Uterus (tissue), 4 donors: ENCODE measurements at regions of chr17 and their contacts with region 1.

Region 1: DNA sequence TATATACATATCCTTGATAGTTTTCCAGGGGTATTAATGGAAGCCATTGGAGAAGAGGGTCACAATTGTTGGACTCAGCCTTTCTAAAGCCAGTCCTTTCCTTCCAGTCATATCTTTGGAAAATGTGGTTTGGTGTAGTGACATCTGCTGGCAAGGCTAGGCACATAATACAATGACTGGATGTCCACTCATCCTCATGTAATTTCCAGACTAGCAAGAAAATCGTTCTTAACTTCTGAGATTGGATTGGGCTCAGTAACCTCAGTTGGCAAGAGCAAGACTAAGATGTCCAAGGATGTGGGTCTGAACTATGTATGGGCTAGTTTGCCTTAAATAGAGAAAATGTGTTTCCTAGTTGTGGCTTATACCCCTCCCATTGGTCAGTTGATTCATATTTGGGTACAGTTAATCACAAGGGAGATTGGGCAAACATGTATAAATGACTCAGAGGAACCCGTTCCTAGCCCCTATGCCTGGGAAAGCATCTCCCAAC is 8.7 kb upstream of the KAT7 start:
- DNase-seq: peak in 1 of 2 donors; percentile 54
- H3K4me3 ChIP-seq: no peak overlapping the region
- H3K27ac ChIP-seq: peak overlapping the region in 1 of 2 donors; percentile 4
- H3K4me1 ChIP-seq: peaks cover 14 to 16% of the 10 kb centered on the region in 2 donors
- H3K27me3 ChIP-seq: no peaks in the 10 kb centered on the region
- CTCF ChIP-seq: peak; percentile 53 to 88 (median 68)
- POLR2A ChIP-seq: no peak

Region 2: DNA sequence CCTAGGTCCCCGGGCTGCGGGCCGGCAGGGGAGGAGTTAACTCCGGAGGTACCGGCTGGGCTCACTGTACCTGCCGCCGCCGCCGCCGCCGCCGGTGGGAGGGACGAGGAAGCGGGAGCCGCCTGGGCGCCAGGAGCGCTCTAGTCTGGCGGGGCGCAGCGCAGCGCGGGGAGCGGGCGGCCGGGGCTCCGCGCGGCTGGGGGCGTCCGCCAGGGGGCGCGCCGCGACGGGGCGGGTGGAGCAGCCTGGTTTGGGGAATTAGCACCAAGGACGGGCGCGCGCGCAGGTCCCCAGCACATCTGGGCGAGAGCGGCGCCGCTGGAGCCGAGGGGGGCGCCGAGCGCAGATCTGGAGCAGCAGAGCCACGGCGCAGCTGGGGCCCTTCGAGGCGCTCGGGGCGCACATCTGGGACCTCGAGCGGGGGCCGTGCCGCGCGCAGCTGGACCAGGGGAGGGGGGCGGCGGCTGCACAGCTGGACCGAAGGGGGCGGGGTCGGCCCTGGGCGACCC is 204.2 kb before region 1 on chr17 and contains the start of gene NXPH3:
- intact Hi-C with region 1: loop called (anchors 10 kb)
- DNase-seq: peak; percentile 63 to 76
- H3K4me3 ChIP-seq: peak within 1 kb of the TSS; percentile 56 to 84
- H3K27ac ChIP-seq: peak within 1 kb of the TSS; percentile 93
- H3K4me1 ChIP-seq: peaks cover 9 to 13% of the 10 kb centered on the region in 2 donors
- H3K27me3 ChIP-seq: no peaks in the 10 kb centered on the region
- CTCF ChIP-seq: peak; percentile 26 to 88 (median 74)
- POLR2A ChIP-seq: peak in 1 of 2 donors; percentile 43
- total RNA-seq, gene NXPH3: 5.8 to 24.3 (median 9.0) TPM

Region 3: GRCh38 chr17:49707608-49708514 is 71.9 kb before region 1 on chr17 and contains the start of gene SLC35B1:
- intact Hi-C with region 1: loop called (anchors 5 kb)
- DNase-seq: peak; percentile 99
- H3K4me3 ChIP-seq: peak within 1 kb of the TSS; percentile 94
- H3K27ac ChIP-seq: peak within 1 kb of the TSS; percentile 87 to 92
- H3K4me1 ChIP-seq: peaks cover 0 to 7% of the 10 kb centered on the region in 2 donors
- H3K27me3 ChIP-seq: no peaks in the 10 kb centered on the region
- CTCF ChIP-seq: peak; percentile 55 to 78 (median 72)
- POLR2A ChIP-seq: peak in 1 of 2 donors; percentile 55
- total RNA-seq, gene SLC35B1: 23.6 to 49.1 (median 36.3) TPM

Region 4: GRCh38 chr17:49723423-49723822 is 56.4 kb before region 1 on chr17:
- intact Hi-C with region 1: loop called (anchors 5 kb)
- DNase-seq: peak; percentile 88 to 91
- H3K4me3 ChIP-seq: no peak overlapping the region
- H3K27ac ChIP-seq: peak overlapping the region; percentile 82 to 84
- H3K4me1 ChIP-seq: peaks cover 15 to 18% of the 10 kb centered on the region in 2 donors
- H3K27me3 ChIP-seq: no peaks in the 10 kb centered on the region
- CTCF ChIP-seq: no peak
- POLR2A ChIP-seq: peak in 1 of 2 donors; percentile 13

Region 5: GRCh38 chr17:49861150-49861892 is 81.5 kb after region 1 on chr17:
- intact Hi-C with region 1: no loop called
- DNase-seq: peak in 1 of 2 donors; percentile 40
- H3K4me3 ChIP-seq: no peak overlapping the region
- H3K27ac ChIP-seq: no peak overlapping the region
- H3K4me1 ChIP-seq: no peaks in the 10 kb centered on the region
- H3K27me3 ChIP-seq: no peaks in the 10 kb centered on the region
- CTCF ChIP-seq: peak; percentile 62 to 81 (median 76)
- POLR2A ChIP-seq: no peak